Cardiac septum (tissue), 1 donor: ENCODE measurements at regions of chr19 and their contacts with region 1.

Region 1: GRCh38 chr19:7293795-7294570 is at the start of gene INSR:
- DNase-seq: peak; percentile 93
- total RNA-seq, gene INSR: 113 TPM

Region 2: GRCh38 chr19:7145494-7146485 is 148.2 kb before region 1 on chr19:
- intact Hi-C with region 1: loop called (anchors 5 kb)
- DNase-seq: no peak

Region 3: GRCh38 chr19:7159105-7159933 is 134.7 kb before region 1 on chr19:
- intact Hi-C with region 1: loop called (anchors 5 kb)
- DNase-seq: peak; percentile 89

Region 4: DNA sequence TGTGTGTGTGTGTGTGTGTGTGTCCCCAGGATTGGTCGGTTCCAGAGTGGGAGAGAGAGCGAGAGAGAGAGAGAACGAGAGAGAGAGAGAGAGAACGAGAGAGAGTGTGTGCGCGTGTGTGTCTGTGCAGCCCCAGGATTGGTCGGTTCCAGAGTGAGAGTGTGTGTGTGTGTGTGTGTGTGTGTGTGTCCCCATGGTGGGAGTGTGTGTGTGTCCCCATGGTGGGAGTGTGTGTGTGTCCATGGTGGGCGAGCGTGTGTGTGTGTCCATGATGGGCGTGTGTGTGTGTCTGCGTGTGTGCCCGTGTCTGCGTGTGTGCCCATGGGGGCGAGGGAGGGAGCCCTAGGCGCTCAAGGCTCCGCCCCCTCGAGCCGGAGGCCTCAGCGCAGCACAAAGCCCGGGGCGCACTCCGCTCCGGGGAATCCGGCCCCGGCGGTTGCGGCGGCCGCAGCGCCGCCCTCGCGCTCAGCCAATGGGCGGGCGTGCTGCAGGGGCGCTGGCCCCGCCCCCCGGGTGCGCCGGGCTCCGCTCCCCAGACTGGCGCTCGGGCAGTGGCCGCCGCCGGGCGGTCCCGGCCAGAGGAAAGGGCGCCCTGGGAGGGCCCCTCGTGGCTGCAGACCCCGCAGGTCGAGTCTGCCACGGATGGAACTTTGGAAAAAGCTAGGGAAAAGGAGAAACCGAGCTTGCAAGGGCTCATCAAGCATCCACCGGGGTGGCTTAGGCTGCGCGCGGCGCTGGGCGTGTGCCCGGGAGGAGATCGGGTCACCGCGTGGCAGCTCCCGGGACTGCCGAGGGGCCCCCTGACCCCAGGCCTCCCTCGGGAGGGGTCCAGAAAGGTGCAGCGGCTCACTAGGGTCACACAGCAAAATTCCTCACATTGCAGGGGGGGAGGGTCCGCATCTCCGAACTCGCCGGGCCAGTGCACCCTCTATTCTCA is 96.0 kb before region 1 on chr19:
- intact Hi-C with region 1: loop called (anchors 1 kb)
- DNase-seq: peak; percentile 94

Region 5: GRCh38 chr19:7230826-7231225 is 63.2 kb before region 1 on chr19:
- intact Hi-C with region 1: no loop called
- DNase-seq: peak; percentile 85